CD4-positive, alpha-beta memory T cell (primary cell): ENCODE measurements at regions of chr2 and their contacts with region 1.

Region 1: DNA sequence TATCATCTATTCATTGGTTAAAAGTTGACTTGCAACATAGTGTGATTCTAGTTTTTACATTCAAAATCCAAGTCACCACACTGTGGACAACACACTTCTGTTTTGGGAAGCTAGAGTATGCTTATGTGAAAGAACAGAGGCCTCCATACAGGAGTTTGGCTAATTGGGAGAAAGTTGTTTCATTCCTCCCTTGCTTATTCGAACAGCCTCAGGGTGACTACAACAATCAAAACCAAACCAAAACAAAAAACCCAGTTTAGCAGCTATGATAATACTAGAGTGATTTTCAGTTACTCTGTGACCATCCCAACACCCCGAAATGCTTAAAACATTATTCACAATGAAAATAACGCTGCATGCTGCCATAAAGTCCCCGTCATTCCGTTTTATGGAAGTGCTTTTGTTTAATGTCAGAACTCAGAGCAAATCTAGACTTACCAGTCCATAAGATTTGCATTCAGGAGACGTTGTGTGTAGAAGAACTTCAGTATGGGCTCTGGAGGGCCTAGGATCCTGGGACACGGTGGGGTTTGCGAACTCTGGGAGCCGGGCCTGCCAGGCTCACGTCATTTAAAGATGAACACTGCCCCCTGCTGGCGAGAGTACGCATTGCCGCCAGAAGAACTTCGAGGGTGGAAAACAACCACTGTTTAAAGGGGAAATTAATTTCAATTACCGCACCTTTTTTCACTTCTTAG is 111.4 kb downstream of the FTCDNL1 start:
- DNase-seq: peak; percentile 24 to 57 (median 26)
- H3K4me3 ChIP-seq: no peak overlapping the region
- H3K4me3 Mint-ChIP-seq: peak overlapping the region in 1 of 8 donors; percentile 25
- H3K27ac ChIP-seq: no peak overlapping the region
- H3K27ac Mint-ChIP-seq: peak overlapping the region in 1 of 7 donors; percentile 57
- H3K4me1 ChIP-seq: peaks cover 8% of the 10 kb centered on the region
- H3K4me1 Mint-ChIP-seq: peaks cover 3 to 7% (median 5%) of the 10 kb centered on the region in 4 donors
- H3K27me3 ChIP-seq: peaks cover 8% of the 10 kb centered on the region
- H3K27me3 Mint-ChIP-seq: peaks cover 10 to 14% of the 10 kb centered on the region in 2 donors

Region 2: DNA sequence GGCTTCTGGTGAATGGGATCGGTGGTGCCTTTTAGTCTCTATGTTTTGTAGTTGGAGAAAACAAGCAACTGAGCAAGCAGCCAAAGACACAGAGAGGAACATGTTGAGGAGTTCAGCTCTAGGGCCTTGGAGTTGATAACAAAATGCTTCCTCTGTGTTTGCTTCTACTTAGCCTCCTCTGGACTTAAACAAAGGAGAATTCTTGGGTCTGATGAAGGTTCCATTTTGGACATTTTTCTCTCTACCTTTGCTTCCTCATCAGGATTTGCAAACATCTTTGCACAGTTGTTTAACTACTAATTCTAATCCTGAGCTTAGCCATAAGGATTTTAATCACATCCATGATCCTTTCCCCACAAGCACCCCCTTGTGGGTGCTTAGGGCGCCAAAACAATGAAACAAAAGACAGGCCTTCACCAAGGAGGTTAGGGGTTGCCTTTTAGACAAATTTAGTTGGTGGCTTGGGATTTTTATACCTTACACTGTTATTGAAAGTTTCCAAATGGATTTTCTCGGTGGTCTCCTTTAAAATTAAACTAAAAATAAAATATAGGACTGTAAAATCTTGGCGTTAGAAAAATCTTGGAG is 133.3 kb before region 1 on chr2:
- CTCF ChIA-PET with region 1: no interaction called
- POLR2A ChIA-PET with region 1: no interaction called
- intact Hi-C with region 1: no loop called
- DNase-seq: no peak
- H3K4me3 ChIP-seq: no peak overlapping the region
- H3K4me3 Mint-ChIP-seq: no peak overlapping the region
- H3K27ac ChIP-seq: no peak overlapping the region
- H3K27ac Mint-ChIP-seq: no peak overlapping the region
- H3K4me1 ChIP-seq: no peaks in the 10 kb centered on the region
- H3K4me1 Mint-ChIP-seq: peaks cover 0 to 4% (median 2%) of the 10 kb centered on the region in 4 donors
- H3K27me3 ChIP-seq: no peaks in the 10 kb centered on the region
- H3K27me3 Mint-ChIP-seq: peaks cover 0 to 14% of the 10 kb centered on the region in 2 donors

Region 3: GRCh38 chr2:199727306-199727705 is 12.3 kb before region 1 on chr2:
- CTCF ChIA-PET with region 1: interaction called, 26 read pairs
- POLR2A ChIA-PET with region 1: no interaction called
- intact Hi-C with region 1: no loop called
- DNase-seq: no peak
- H3K4me3 ChIP-seq: no peak overlapping the region
- H3K4me3 Mint-ChIP-seq: no peak overlapping the region
- H3K27ac ChIP-seq: no peak overlapping the region
- H3K27ac Mint-ChIP-seq: no peak overlapping the region
- H3K4me1 ChIP-seq: no peaks in the 10 kb centered on the region
- H3K4me1 Mint-ChIP-seq: no peaks in the 10 kb centered on the region
- H3K27me3 ChIP-seq: no peaks in the 10 kb centered on the region
- H3K27me3 Mint-ChIP-seq: peaks cover 18 to 21% of the 10 kb centered on the region in 2 donors

Region 4: DNA sequence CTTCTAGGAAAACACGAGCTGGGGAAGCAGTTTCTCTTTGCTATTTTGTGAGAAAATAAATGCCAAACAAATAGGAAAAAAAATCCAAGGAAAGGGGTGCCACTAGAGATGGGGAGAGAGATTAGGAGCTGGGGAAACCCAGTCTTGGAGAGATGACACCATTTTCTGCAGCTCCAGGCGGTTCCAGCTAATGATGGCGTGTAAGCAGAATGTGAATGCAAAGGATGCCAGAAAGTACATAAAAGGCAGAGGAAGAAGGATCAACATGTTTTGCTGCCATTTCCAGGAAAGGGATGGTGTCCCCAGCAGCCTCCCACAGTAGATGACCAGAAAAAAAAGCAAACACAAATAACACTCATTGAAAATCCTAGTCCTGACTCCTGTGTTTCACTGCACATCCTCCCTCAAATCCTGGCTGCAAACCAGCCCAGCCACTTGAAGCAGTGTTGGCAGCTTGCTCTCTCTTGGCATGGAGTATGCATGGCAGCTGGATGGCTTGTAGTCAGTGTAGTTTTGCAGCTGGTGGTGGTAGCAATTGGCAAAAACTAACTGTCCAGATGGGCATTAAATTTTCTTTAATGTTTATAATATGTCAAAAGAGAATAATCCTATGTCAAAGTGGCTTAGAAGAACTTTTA is 17.8 kb after region 1 on chr2:
- CTCF ChIA-PET with region 1: interaction called, 85 read pairs
- POLR2A ChIA-PET with region 1: no interaction called
- intact Hi-C with region 1: no loop called
- DNase-seq: no peak
- H3K4me3 ChIP-seq: no peak overlapping the region
- H3K4me3 Mint-ChIP-seq: no peak overlapping the region
- H3K27ac ChIP-seq: no peak overlapping the region
- H3K27ac Mint-ChIP-seq: no peak overlapping the region
- H3K4me1 ChIP-seq: no peaks in the 10 kb centered on the region
- H3K4me1 Mint-ChIP-seq: no peaks in the 10 kb centered on the region
- H3K27me3 ChIP-seq: no peaks in the 10 kb centered on the region
- H3K27me3 Mint-ChIP-seq: no peaks in the 10 kb centered on the region